CD4-positive, alpha-beta T cell (primary cell): ENCODE measurements at regions of chr6 and their contacts with region 1.

Region 1: GRCh38 chr6:131532580-131533039 is 40.4 kb upstream of the ARG1 start:
- DNase-seq: peak in 2 of 14 experiments; percentile 16 to 28
- ATAC-seq: no peak
- H3K4me3 ChIP-seq: no peak overlapping the region
- H3K4me3 Mint-ChIP-seq: no peak overlapping the region
- H3K27ac ChIP-seq: no peak overlapping the region
- H3K27ac Mint-ChIP-seq: peak overlapping the region; percentile 68
- H3K4me1 ChIP-seq: peaks cover 21% of the 10 kb centered on the region
- H3K4me1 Mint-ChIP-seq: peaks cover 61% of the 10 kb centered on the region
- H3K27me3 ChIP-seq: no peaks in the 10 kb centered on the region
- H3K27me3 Mint-ChIP-seq: no peaks in the 10 kb centered on the region
- CTCF ChIP-seq: no peak

Region 2: GRCh38 chr6:130760006-130760405 is 772.6 kb before region 1 on chr6:
- CTCF ChIA-PET with region 1: no interaction called
- POLR2A ChIA-PET with region 1: no interaction called
- intact Hi-C with region 1: no loop called
- DNase-seq: no peak
- ATAC-seq: no peak
- H3K4me3 ChIP-seq: no peak overlapping the region
- H3K4me3 Mint-ChIP-seq: no peak overlapping the region
- H3K27ac ChIP-seq: no peak overlapping the region
- H3K27ac Mint-ChIP-seq: no peak overlapping the region
- H3K4me1 ChIP-seq: peaks cover 5% of the 10 kb centered on the region
- H3K4me1 Mint-ChIP-seq: no peaks in the 10 kb centered on the region
- H3K27me3 ChIP-seq: no peaks in the 10 kb centered on the region
- H3K27me3 Mint-ChIP-seq: no peaks in the 10 kb centered on the region
- CTCF ChIP-seq: no peak

Region 3: GRCh38 chr6:131116749-131117360 is 415.8 kb before region 1 on chr6:
- CTCF ChIA-PET with region 1: no interaction called
- POLR2A ChIA-PET with region 1: no interaction called
- intact Hi-C with region 1: loop called in 1 of 2 experiments (anchors 5 kb)
- DNase-seq: peak in 3 of 14 experiments; percentile 51 to 68 (median 64)
- ATAC-seq: no peak
- H3K4me3 ChIP-seq: no peak overlapping the region
- H3K4me3 Mint-ChIP-seq: no peak overlapping the region
- H3K27ac ChIP-seq: no peak overlapping the region
- H3K27ac Mint-ChIP-seq: no peak overlapping the region
- H3K4me1 ChIP-seq: no peaks in the 10 kb centered on the region
- H3K4me1 Mint-ChIP-seq: no peaks in the 10 kb centered on the region
- H3K27me3 ChIP-seq: no peaks in the 10 kb centered on the region
- H3K27me3 Mint-ChIP-seq: no peaks in the 10 kb centered on the region
- CTCF ChIP-seq: peak; percentile 66

Region 4: GRCh38 chr6:131135244-131136020 is 397.2 kb before region 1 on chr6 and contains the start of gene AKAP7:
- CTCF ChIA-PET with region 1: no interaction called
- POLR2A ChIA-PET with region 1: no interaction called
- intact Hi-C with region 1: loop called in 1 of 2 experiments (anchors 5 kb)
- DNase-seq: peak; percentile 21 to 71 (median 44)
- ATAC-seq: peak; percentile 81
- H3K4me3 ChIP-seq: peak within 1 kb of the TSS; percentile 75
- H3K4me3 Mint-ChIP-seq: peak within 1 kb of the TSS; percentile 98
- H3K27ac ChIP-seq: peak within 1 kb of the TSS; percentile 31 to 44
- H3K27ac Mint-ChIP-seq: peak within 1 kb of the TSS; percentile 93
- H3K4me1 ChIP-seq: peaks cover 13% of the 10 kb centered on the region
- H3K4me1 Mint-ChIP-seq: peaks cover 41% of the 10 kb centered on the region
- H3K27me3 ChIP-seq: no peaks in the 10 kb centered on the region
- H3K27me3 Mint-ChIP-seq: no peaks in the 10 kb centered on the region
- CTCF ChIP-seq: no peak
- total RNA-seq, gene AKAP7: 9.1 to 12.2 TPM

Region 5: GRCh38 chr6:131182991-131183425 is 349.6 kb before region 1 on chr6:
- CTCF ChIA-PET with region 1: interaction called, 13 read pairs
- POLR2A ChIA-PET with region 1: interaction called, 13 read pairs
- intact Hi-C with region 1: loop called (anchors 1 kb)
- DNase-seq: peak in 6 of 14 experiments; percentile 0 to 71 (median 57)
- ATAC-seq: peak; percentile 91
- H3K4me3 ChIP-seq: no peak overlapping the region
- H3K4me3 Mint-ChIP-seq: peak overlapping the region; percentile 81
- H3K27ac ChIP-seq: no peak overlapping the region
- H3K27ac Mint-ChIP-seq: peak overlapping the region; percentile 87
- H3K4me1 ChIP-seq: peaks cover 12% of the 10 kb centered on the region
- H3K4me1 Mint-ChIP-seq: peaks cover 20% of the 10 kb centered on the region
- H3K27me3 ChIP-seq: no peaks in the 10 kb centered on the region
- H3K27me3 Mint-ChIP-seq: no peaks in the 10 kb centered on the region
- CTCF ChIP-seq: peak; percentile 81

Region 6: DNA sequence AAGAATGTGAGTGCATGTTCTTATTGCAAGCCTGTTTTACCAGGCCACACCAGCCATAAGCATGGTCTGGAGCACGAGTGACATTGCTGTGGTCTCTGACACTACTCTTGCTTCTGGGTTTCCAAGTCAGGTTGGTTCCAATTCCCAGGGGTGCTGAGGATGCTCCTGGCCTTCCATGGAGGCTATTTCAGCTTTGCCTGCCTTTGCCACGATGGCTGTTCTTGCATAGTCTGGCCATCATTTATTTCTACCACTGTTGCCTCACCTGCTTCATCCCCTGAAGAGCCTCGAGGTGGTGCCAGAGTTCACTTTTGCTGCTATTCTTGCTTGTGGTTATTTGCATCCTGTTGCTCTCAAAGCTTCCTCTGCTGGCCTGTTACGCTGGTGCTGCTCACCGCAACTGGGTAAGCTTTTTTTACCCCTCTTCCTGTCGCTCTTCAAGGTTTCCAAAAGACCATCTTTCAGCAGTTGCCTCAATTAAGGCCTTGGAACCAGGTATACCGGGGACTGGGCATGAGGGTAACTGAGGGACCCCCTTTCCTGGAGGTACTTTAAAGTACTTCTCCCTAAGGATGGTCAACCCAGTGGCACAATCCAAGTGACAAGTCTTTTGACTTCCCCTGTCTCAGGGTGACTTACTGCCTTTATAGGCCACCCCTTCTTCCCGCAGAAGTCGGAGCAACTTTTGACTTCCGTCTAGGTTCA is 332.9 kb before region 1 on chr6:
- CTCF ChIA-PET with region 1: interaction called, 52 read pairs
- POLR2A ChIA-PET with region 1: interaction called, 31 read pairs
- intact Hi-C with region 1: loop called in 1 of 2 experiments (anchors 1 kb)
- DNase-seq: peak; percentile 58 to 95 (median 68)
- ATAC-seq: peak; percentile 92
- H3K4me3 ChIP-seq: peak overlapping the region; percentile 43
- H3K4me3 Mint-ChIP-seq: peak overlapping the region; percentile 84
- H3K27ac ChIP-seq: peak overlapping the region; percentile 72 to 80
- H3K27ac Mint-ChIP-seq: peak overlapping the region; percentile 98
- H3K4me1 ChIP-seq: peaks cover 40% of the 10 kb centered on the region
- H3K4me1 Mint-ChIP-seq: peaks cover 68% of the 10 kb centered on the region
- H3K27me3 ChIP-seq: no peaks in the 10 kb centered on the region
- H3K27me3 Mint-ChIP-seq: no peaks in the 10 kb centered on the region
- CTCF ChIP-seq: peak; percentile 76

Region 7: GRCh38 chr6:131205481-131206244 is 326.9 kb before region 1 on chr6:
- CTCF ChIA-PET with region 1: interaction called, 52 read pairs
- POLR2A ChIA-PET with region 1: interaction called, 31 read pairs
- intact Hi-C with region 1: loop called (anchors 1 to 2 kb)
- DNase-seq: peak in 3 of 14 experiments; percentile 9 to 19 (median 11)
- ATAC-seq: peak; percentile 37
- H3K4me3 ChIP-seq: no peak overlapping the region
- H3K4me3 Mint-ChIP-seq: peak overlapping the region; percentile 39
- H3K27ac ChIP-seq: no peak overlapping the region
- H3K27ac Mint-ChIP-seq: peak overlapping the region; percentile 72
- H3K4me1 ChIP-seq: peaks cover 20% of the 10 kb centered on the region
- H3K4me1 Mint-ChIP-seq: peaks cover 65% of the 10 kb centered on the region
- H3K27me3 ChIP-seq: no peaks in the 10 kb centered on the region
- H3K27me3 Mint-ChIP-seq: no peaks in the 10 kb centered on the region
- CTCF ChIP-seq: peak; percentile 39

Region 8: GRCh38 chr6:131317516-131317915 is 215.1 kb before region 1 on chr6:
- CTCF ChIA-PET with region 1: no interaction called
- POLR2A ChIA-PET with region 1: no interaction called
- intact Hi-C with region 1: no loop called
- DNase-seq: no peak
- ATAC-seq: no peak
- H3K4me3 ChIP-seq: no peak overlapping the region
- H3K4me3 Mint-ChIP-seq: no peak overlapping the region
- H3K27ac ChIP-seq: no peak overlapping the region
- H3K27ac Mint-ChIP-seq: no peak overlapping the region
- H3K4me1 ChIP-seq: no peaks in the 10 kb centered on the region
- H3K4me1 Mint-ChIP-seq: no peaks in the 10 kb centered on the region
- H3K27me3 ChIP-seq: no peaks in the 10 kb centered on the region
- H3K27me3 Mint-ChIP-seq: no peaks in the 10 kb centered on the region
- CTCF ChIP-seq: no peak

Region 9: DNA sequence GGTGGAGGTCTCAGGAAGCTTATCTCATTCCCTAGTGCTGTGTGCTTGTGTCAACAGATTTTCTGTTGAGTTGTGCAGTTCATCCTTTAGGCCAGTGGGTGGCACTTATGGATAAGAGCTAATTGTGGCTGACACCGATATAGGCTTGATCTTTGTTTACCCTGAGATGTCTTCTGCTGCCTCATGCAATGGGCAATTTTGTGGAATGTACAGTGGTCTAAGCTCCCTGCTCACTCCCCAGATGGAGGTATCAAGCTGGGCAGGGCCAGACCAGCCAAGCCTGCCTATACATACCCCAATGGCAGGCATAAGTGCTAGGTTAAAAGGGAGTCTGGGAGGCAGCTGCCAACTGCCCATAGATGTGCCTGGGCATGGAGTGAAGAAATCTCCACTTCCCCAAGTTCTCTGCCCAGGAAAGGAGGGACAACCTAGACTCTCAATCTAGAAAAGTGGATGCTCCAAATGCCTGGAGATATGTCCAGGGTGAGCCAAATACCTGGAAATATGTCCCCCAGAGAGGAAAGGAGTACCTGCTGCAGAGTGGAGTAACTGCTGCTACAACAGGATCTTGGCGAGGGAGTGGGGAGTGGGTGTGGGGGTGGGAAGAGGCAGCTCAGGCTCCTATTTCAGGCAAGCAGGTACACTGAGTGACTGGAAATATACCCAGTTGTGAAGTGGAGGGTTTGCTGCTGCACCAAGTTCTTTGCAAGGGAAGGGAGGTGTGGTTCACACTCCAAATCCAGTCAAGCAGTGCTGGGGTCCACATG is 12.8 kb before region 1 on chr6:
- CTCF ChIA-PET with region 1: interaction called, 20 read pairs
- POLR2A ChIA-PET with region 1: interaction called, 13 read pairs
- intact Hi-C with region 1: no loop called
- DNase-seq: peak in 12 of 14 experiments; percentile 15 to 73 (median 32)
- ATAC-seq: peak; percentile 99
- H3K4me3 ChIP-seq: no peak overlapping the region
- H3K4me3 Mint-ChIP-seq: no peak overlapping the region
- H3K27ac ChIP-seq: no peak overlapping the region
- H3K27ac Mint-ChIP-seq: no peak overlapping the region
- H3K4me1 ChIP-seq: peaks cover 14% of the 10 kb centered on the region
- H3K4me1 Mint-ChIP-seq: peaks cover 25% of the 10 kb centered on the region
- H3K27me3 ChIP-seq: no peaks in the 10 kb centered on the region
- H3K27me3 Mint-ChIP-seq: no peaks in the 10 kb centered on the region
- CTCF ChIP-seq: peak; percentile 75